Activated CD4-positive, alpha-beta memory T cell treated with anti-CD3 and anti-CD28 coated beads, Interleukin-2, amount 10 ng/mL, durations not matched to agents 7 days and 5 days (primary cell): ENCODE measurements at regions of chr11 and their contacts with region 1.

Region 1: DNA sequence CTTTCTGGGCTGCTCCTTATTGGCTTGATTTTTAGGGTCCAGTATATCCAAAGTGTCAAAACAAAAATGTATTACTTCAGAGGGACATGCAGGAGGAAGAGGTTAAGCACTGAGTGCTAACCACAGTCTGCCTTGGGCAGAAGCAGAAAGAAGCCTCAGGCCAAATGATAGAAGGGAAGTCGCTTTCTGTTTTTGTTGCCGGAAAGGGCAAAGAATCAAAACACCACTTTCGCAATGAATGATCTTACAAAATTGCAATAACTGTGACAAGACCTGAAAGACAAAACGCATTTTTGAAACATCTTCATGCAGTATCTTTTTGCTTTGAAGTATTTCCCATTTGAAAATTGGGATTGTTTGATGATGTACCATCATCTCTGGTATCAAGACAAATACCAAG is 70.1 kb upstream of the PICALM start:
- DNase-seq: peak; percentile 60
- H3K4me3 Mint-ChIP-seq: peak overlapping the region; percentile 44
- H3K27ac Mint-ChIP-seq: peak overlapping the region; percentile 94
- H3K4me1 Mint-ChIP-seq: peaks cover 68% of the 10 kb centered on the region
- H3K27me3 Mint-ChIP-seq: no peaks in the 10 kb centered on the region

Region 2: GRCh38 chr11:86101941-86102407 is 37.0 kb before region 1 on chr11:
- CTCF ChIA-PET with region 1: no interaction called
- POLR2A ChIA-PET with region 1: no interaction called
- DNase-seq: no peak
- H3K4me3 Mint-ChIP-seq: no peak overlapping the region
- H3K27ac Mint-ChIP-seq: no peak overlapping the region
- H3K4me1 Mint-ChIP-seq: no peaks in the 10 kb centered on the region
- H3K27me3 Mint-ChIP-seq: no peaks in the 10 kb centered on the region

Region 3: GRCh38 chr11:86116386-86116726 is 22.6 kb before region 1 on chr11:
- CTCF ChIA-PET with region 1: no interaction called
- POLR2A ChIA-PET with region 1: interaction called, 16 read pairs
- DNase-seq: peak; percentile 44
- H3K4me3 Mint-ChIP-seq: peak overlapping the region; percentile 5
- H3K27ac Mint-ChIP-seq: peak overlapping the region; percentile 67
- H3K4me1 Mint-ChIP-seq: peaks cover 32% of the 10 kb centered on the region
- H3K27me3 Mint-ChIP-seq: peaks cover 3% of the 10 kb centered on the region